ENCODE measurements at regions of chr2 and their contacts with region 1.

Region 1: GRCh38 chr2:85642725-85643124 is 25.3 kb downstream of the SFTPB start:
- DNase-seq: no peak
- ATAC-seq: no peak
- H3K4me3 Mint-ChIP-seq: no peak overlapping the region
- H3K27ac Mint-ChIP-seq: no peak overlapping the region
- H3K4me1 Mint-ChIP-seq: no peaks in the 10 kb centered on the region
- H3K27me3 Mint-ChIP-seq: no peaks in the 10 kb centered on the region; the same call in 1 of the 2 replicates
- CTCF ChIP-seq: no peak

Region 2: DNA sequence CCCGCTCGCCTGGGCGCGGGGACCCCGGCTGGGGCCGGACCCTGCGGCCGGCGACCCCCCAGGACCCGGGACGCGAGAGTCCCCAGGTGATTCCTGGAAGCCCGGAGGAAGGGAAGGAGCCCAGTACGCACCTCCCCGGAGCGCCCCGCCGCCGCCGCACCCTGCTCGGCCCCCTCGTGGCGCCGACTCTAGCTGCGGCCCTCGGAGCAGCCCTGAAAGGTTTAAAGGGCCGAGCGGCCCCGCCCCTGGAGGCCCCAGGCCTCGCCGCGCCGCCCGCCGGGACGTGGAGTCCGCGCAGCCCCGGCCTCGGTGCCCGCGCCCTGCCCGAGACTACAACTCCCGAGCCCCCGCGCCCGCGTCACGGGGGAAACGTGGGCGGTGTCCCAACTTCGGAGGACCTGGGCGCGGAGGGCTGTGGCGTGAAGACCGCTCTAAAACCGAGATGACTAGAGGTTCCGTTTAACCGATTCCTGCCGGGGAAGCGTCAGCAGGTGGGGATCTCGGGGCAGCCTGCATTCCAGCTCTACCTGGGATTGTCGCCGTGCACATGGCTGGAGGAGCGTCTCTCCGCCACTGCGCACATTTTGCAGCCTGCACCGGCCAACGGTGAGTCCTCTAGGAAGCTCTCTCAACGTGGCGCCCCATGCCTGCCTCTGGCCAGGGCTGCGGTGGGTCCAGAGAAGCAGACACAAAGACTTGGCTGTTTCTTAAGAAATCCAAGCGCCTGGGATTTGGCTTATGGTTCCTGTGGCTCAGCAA is 40.1 kb before region 1 on chr2 and contains the start of gene TMEM150A:
- CTCF ChIA-PET with region 1: interaction called, 11 read pairs
- POLR2A ChIA-PET with region 1: no interaction called
- DNase-seq: peak; percentile 88
- ATAC-seq: peak; percentile 88
- H3K4me3 Mint-ChIP-seq: peak within 1 kb of the TSS; percentile 93
- H3K27ac Mint-ChIP-seq: peak within 1 kb of the TSS; percentile 94
- H3K4me1 Mint-ChIP-seq: peaks cover 18% of the 10 kb centered on the region
- H3K27me3 Mint-ChIP-seq: no peaks in the 10 kb centered on the region
- CTCF ChIP-seq: no peak
- total RNA-seq, gene TMEM150A: 20.9 to 23.1 TPM (median 21.6 TPM) in 3 replicates

Region 3: DNA sequence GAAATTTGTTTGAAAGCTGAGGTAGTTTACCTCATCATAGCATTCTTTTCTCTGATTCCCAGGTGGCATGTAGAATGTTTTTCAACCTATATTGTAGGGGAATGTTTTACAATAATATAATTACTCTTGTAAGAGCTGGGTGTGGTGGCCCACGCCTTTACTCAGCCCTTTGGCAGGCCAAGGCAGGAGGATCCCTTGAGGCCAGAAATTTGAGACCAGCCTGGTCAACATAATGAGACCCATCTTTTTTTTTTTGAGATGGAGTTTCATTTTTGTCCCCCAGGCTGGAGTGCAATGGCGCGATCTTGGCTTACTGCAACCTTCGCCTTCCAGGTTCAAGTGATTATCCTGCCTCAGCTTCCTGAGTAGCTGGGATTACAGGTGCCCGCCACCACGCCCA is 23.1 kb before region 1 on chr2:
- CTCF ChIA-PET with region 1: interaction called, 13 read pairs
- POLR2A ChIA-PET with region 1: no interaction called
- DNase-seq: no peak
- ATAC-seq: no peak
- H3K4me3 Mint-ChIP-seq: no peak overlapping the region
- H3K27ac Mint-ChIP-seq: no peak overlapping the region
- H3K4me1 Mint-ChIP-seq: peaks cover 6% of the 10 kb centered on the region
- H3K27me3 Mint-ChIP-seq: no peaks in the 10 kb centered on the region
- CTCF ChIP-seq: no peak

Region 4: DNA sequence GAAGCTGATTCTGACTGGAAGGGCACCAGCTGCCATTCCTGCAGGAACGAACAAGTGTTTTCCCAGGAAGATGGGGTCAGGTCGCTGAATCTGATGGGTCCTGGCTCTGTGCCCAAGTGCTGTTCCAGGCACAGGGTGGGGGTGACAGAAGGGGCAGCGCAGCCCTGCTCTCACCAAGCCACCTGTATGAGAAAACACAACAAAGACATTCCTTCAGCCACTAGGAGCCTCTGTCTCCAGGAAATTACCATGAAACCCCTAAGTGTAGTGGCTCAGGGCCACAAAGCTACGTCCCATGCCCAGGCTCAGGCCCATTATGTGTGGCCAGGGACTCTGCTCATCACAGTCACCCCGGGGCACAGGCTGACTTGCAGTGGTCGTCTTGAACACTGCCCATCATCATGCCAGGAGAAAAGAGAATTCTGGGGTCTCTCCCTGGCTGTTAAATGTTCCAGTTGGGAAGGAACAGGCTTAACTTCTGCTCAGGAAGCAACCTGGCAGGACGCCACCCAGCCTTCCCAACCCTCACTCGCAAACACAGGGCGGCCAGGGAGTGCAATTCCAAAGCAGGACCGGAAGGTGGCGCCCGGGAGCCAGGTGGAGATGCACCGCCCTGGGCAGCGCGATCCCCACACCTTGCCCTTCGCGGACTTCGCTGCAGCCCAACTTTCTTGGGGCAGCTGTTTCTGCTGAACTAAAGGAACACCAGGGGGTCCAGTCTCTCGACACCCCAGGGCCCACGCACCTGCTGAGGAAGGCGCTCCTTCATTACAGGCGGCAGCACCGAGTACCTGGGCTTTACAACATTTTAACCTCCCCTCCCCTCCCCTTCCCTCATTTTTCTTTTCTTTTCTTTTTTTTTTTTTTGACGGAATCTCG is 36.3 kb after region 1 on chr2:
- CTCF ChIA-PET with region 1: interaction called, 14 read pairs
- POLR2A ChIA-PET with region 1: no interaction called
- DNase-seq: peak; percentile 92
- ATAC-seq: peak; percentile 96
- H3K4me3 Mint-ChIP-seq: no peak overlapping the region; the same call in 1 of the 2 replicates
- H3K27ac Mint-ChIP-seq: no peak overlapping the region
- H3K4me1 Mint-ChIP-seq: peaks cover 12% of the 10 kb centered on the region
- H3K27me3 Mint-ChIP-seq: peaks cover 5% of the 10 kb centered on the region
- CTCF ChIP-seq: peak; percentile 96

Region 5: DNA sequence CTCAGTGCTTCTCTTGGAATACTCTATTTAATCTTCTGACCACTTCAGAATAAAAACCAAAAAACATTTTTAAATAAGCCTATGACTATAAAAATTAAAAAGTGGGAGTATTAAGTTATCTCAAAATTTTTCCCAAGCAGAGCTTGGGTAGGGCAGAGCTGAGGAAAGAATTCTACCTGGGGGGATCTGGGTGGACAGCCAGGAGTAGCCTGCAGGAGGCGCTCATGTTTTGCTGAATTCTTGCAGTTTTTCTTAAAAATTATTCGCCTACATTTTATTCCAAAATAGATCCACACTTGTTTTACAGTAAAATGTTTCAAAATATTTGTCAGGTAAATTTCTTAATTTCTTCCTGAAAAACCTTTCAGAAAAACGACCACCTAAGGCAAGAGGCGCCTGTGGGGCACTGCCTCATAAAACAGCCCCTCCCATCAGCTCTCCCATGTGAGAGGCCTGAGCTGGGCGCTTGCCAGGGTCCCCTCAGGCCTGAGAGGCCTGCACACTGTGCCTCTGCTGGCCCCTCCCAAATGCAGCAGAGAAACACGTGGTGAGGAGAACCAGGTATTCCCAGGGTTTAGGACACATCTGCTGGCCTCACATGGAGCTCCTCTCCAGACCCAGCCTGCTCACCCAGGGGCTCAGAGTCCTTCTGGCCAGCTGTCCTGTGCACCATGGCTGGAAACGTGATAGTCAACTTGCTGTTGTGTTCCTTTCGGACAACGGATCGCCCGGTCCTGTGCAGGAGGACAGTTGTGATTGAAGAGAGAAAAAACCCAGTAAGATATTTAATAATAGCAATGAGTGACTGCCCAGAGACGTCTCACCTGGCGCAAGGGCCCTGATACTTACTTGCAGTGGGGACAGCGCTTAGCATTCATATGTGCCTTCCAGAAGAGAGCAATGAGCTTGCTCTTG is 445.5 kb after region 1 on chr2:
- CTCF ChIA-PET with region 1: interaction called, 11 read pairs
- POLR2A ChIA-PET with region 1: no interaction called
- DNase-seq: no peak
- ATAC-seq: peak; percentile 68
- H3K4me3 Mint-ChIP-seq: no peak overlapping the region
- H3K27ac Mint-ChIP-seq: no peak overlapping the region
- H3K4me1 Mint-ChIP-seq: no peaks in the 10 kb centered on the region
- H3K27me3 Mint-ChIP-seq: no peaks in the 10 kb centered on the region
- CTCF ChIP-seq: peak; percentile 35; the same call in 1 of the 2 replicates